ENCODE measurements at regions of chr20 and their contacts with region 1.

Region 1: DNA sequence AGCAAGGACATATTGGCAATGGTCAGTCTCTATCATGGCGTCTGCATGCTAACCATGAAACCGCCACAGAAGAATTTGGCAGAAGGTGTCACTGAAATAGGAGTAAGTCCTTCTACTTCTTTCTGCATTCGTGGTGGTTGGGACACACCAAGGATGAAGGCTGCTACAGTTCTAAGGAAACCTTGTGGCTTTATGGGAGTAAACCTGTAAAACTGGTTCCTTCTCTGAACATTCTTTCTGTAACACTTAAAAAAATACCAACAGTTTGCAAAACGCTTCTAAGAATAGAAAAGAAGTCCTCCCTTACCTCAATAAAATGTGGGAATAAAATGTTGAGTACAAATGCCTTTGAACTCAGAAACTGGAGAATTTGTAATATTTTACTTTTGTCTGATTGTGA is 195.3 kb downstream of the SLC24A3 start:
- DNase-seq: peak; percentile 66 to 69
- H3K4me3 ChIP-seq: no peak overlapping the region
- H3K4me3 Mint-ChIP-seq: no peak overlapping the region
- H3K27ac Mint-ChIP-seq: peak overlapping the region; percentile 72
- H3K4me1 ChIP-seq: peaks cover 58% of the 10 kb centered on the region
- H3K4me1 Mint-ChIP-seq: peaks cover 47% of the 10 kb centered on the region
- H3K27me3 ChIP-seq: no peaks in the 10 kb centered on the region
- H3K27me3 Mint-ChIP-seq: no peaks in the 10 kb centered on the region
- CTCF ChIP-seq: no peak

Region 2: GRCh38 chr20:19284400-19285178 is 123.2 kb before region 1 on chr20:
- CTCF ChIA-PET with region 1: no interaction called
- POLR2A ChIA-PET with region 1: no interaction called
- intact Hi-C with region 1: loop called (anchors 5 kb)
- DNase-seq: no peak
- H3K4me3 ChIP-seq: no peak overlapping the region
- H3K4me3 Mint-ChIP-seq: no peak overlapping the region
- H3K27ac Mint-ChIP-seq: peak overlapping the region; percentile 77
- H3K4me1 ChIP-seq: peaks cover 37% of the 10 kb centered on the region
- H3K4me1 Mint-ChIP-seq: peaks cover 22% of the 10 kb centered on the region
- H3K27me3 ChIP-seq: no peaks in the 10 kb centered on the region
- H3K27me3 Mint-ChIP-seq: no peaks in the 10 kb centered on the region
- CTCF ChIP-seq: no peak

Region 3: GRCh38 chr20:19427514-19428312 is 20.0 kb after region 1 on chr20:
- CTCF ChIA-PET with region 1: no interaction called
- POLR2A ChIA-PET with region 1: no interaction called
- intact Hi-C with region 1: loop called (anchors 1 kb)
- DNase-seq: peak; percentile 79 to 80
- H3K4me3 ChIP-seq: no peak overlapping the region
- H3K4me3 Mint-ChIP-seq: peak overlapping the region; percentile 4
- H3K27ac Mint-ChIP-seq: no peak overlapping the region
- H3K4me1 ChIP-seq: peaks cover 16% of the 10 kb centered on the region
- H3K4me1 Mint-ChIP-seq: peaks cover 24% of the 10 kb centered on the region
- H3K27me3 ChIP-seq: no peaks in the 10 kb centered on the region
- H3K27me3 Mint-ChIP-seq: no peaks in the 10 kb centered on the region
- CTCF ChIP-seq: no peak